ENCODE measurements at regions of chr20 and their contacts with region 1.

Region 1: GRCh38 chr20:4956200-4956810 is 45.0 kb downstream of the SLC23A2 start:
- DNase-seq: no peak
- H3K4me3 Mint-ChIP-seq: no peak overlapping the region
- H3K27ac Mint-ChIP-seq: no peak overlapping the region
- H3K4me1 Mint-ChIP-seq: peaks cover 26% of the 10 kb centered on the region
- H3K27me3 Mint-ChIP-seq: no peaks in the 10 kb centered on the region

Region 2: GRCh38 chr20:4585104-4585753 is 371.1 kb before region 1 on chr20:
- intact Hi-C with region 1: no loop called
- DNase-seq: no peak
- H3K4me3 Mint-ChIP-seq: no peak overlapping the region
- H3K27ac Mint-ChIP-seq: no peak overlapping the region
- H3K4me1 Mint-ChIP-seq: no peaks in the 10 kb centered on the region
- H3K27me3 Mint-ChIP-seq: peaks cover 16% of the 10 kb centered on the region

Region 3: GRCh38 chr20:4607287-4607713 is 349.0 kb before region 1 on chr20:
- intact Hi-C with region 1: loop called (anchors 10 kb)
- DNase-seq: peak; percentile 41
- H3K4me3 Mint-ChIP-seq: no peak overlapping the region
- H3K27ac Mint-ChIP-seq: no peak overlapping the region
- H3K4me1 Mint-ChIP-seq: peaks cover 2% of the 10 kb centered on the region
- H3K27me3 Mint-ChIP-seq: peaks cover 22% of the 10 kb centered on the region

Region 4: GRCh38 chr20:4813863-4814695 is 142.2 kb before region 1 on chr20:
- intact Hi-C with region 1: loop called (anchors 2 kb)
- DNase-seq: peak; percentile 73
- H3K4me3 Mint-ChIP-seq: peak overlapping the region; percentile 83
- H3K27ac Mint-ChIP-seq: peak overlapping the region; percentile 97
- H3K4me1 Mint-ChIP-seq: peaks cover 54% of the 10 kb centered on the region
- H3K27me3 Mint-ChIP-seq: no peaks in the 10 kb centered on the region

Region 5: DNA sequence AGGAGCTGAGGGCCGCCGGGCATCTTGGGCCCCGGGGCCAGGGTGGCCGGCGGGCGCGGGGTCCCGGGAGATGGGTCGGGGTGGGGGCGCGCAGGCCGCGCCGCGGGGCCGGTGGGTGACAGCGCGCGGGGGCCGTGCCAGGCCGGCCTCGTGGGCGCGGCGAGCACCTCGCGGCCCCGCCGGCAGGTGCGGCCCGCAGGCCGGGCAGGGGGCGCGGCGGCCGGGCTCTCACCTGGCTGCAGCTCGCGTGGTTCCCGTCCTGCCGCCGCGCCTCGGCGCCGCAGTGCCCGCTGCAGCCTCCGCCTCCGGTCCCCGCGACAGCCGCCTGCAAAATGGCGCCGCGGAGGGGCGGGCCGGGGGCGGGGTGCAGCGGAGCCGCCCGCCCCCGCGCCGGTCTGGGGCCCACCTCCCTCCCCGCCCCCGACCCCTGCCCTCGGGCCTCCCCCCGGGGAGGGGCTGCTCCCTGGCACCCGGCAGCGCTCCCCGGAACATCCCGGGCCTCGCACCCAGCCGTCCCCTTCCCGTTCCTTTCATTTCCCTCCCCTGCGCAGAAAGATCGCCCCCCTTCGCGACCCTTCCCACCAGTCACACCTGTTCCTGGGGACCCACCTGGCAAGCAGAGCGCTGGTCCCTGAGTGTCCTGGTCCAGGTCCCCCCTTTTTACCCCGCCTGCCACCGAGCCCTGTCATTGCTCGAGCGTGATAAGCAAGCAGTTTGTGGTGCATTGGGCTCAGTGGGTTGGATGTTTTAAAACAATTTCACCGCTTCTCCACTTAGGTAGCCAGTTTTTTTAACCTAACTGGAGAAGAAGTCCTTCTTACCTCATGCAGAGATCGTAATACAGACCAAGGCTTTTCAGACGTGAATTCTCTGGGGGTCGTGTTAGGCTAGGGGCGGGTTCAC is 45.1 kb after region 1 on chr20 and contains the start of gene SLC23A2:
- intact Hi-C with region 1: loop called (anchors 5 kb)
- DNase-seq: peak; percentile 43
- H3K4me3 Mint-ChIP-seq: peak within 1 kb of the TSS; percentile 95
- H3K27ac Mint-ChIP-seq: peak within 1 kb of the TSS; percentile 95
- H3K4me1 Mint-ChIP-seq: peaks cover 28% of the 10 kb centered on the region
- H3K27me3 Mint-ChIP-seq: peaks cover 12% of the 10 kb centered on the region
- total RNA-seq, gene SLC23A2: 21.3 and 22.4 TPM in 2 replicates

Region 6: DNA sequence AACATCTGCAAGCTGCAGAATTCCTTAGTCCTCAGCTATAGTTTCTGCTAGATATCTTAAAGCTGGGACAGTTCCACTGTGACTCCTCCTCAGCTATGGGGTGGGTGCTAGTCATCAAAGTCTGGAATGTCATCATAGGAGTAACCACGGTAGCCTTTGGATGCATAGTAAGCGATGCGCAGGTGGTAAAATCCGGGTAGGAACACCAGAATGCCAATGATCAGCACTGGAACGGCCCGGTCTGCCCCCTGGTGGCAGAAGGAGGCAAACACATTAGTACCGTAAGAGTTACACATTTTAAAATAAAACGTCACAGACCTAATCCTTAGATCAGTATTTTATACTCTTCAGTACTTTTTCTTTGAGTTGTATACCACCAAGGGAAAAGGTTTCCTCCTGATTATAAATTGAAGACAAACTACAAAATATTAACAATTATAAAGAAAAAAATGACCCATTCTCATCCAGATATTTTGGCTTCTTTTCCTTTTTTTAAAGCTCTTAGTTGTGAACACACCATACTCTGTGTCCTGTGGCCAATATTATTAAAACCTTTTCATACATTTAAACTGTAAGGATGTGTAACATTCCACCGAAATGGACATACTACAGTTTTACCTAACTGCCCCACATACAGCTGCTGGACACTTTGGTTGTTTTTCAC is 144.5 kb after region 1 on chr20:
- intact Hi-C with region 1: loop called (anchors 5 kb)
- DNase-seq: peak; percentile 55
- H3K4me3 Mint-ChIP-seq: no peak overlapping the region
- H3K27ac Mint-ChIP-seq: no peak overlapping the region
- H3K4me1 Mint-ChIP-seq: peaks cover 4% of the 10 kb centered on the region
- H3K27me3 Mint-ChIP-seq: no peaks in the 10 kb centered on the region

Region 7: DNA sequence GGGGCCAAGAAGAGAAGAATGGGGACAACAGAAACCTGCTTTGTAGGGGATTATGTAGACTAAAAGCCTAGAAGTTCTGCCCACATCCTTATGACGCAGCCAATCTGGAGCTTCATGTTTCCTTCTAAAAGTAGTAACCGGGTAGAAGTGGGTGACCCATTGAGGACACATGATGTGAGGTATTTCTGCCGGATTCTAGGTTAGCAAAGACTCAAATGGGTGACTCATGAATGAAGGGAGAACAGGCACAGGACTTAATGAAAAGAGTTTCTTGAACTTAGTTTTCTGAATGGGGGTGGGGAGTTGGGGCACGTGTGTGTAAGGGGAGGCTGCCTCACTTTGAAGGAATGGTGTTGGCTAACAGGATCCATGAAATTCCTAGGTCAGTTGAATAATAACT is 239.3 kb after region 1 on chr20:
- intact Hi-C with region 1: no loop called
- DNase-seq: no peak
- H3K4me3 Mint-ChIP-seq: no peak overlapping the region
- H3K27ac Mint-ChIP-seq: no peak overlapping the region
- H3K4me1 Mint-ChIP-seq: peaks cover 11% of the 10 kb centered on the region
- H3K27me3 Mint-ChIP-seq: no peaks in the 10 kb centered on the region

Measured in activated T-helper 2 cell treated with anti-CD3 and anti-CD28 coated beads, Interferon-gamma antibody, Interleukin-2, Interleukin-4, amounts not matched to agents 10 μg/mL and 5 μg/mL and 100 μg/mL, durations not matched to agents 14 hours and 24 hours and 36 hours (primary cell).